ENCODE measurements at regions of chrX and their contacts with region 1.

Region 1: DNA sequence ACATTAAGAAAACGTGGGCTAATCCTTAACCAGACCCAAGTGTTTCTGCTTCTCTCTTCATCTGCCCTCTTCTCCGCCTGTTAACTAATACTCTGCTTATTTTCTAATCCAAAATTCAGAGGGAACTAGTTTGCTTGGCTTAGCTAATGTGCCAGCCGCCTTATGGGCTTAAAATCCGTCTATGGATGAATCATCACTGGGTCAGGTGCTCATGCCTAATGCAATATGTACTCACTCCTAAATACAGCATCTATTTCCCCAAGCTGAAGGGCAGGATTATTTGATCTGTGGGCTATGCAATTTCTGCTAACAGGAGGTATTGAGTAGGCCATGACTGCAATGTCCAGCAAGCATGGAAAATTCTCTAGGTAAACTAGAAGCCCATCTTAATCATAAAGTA is 12.4 kb downstream of the DYNLT3 start:
- DNase-seq: no peak
- ATAC-seq: no peak
- H3K4me3 Mint-ChIP-seq: no peak overlapping the region
- H3K27ac Mint-ChIP-seq: no peak overlapping the region
- H3K4me1 Mint-ChIP-seq: peaks cover 1% of the 10 kb centered on the region
- H3K27me3 Mint-ChIP-seq: no peaks in the 10 kb centered on the region

Region 2: DNA sequence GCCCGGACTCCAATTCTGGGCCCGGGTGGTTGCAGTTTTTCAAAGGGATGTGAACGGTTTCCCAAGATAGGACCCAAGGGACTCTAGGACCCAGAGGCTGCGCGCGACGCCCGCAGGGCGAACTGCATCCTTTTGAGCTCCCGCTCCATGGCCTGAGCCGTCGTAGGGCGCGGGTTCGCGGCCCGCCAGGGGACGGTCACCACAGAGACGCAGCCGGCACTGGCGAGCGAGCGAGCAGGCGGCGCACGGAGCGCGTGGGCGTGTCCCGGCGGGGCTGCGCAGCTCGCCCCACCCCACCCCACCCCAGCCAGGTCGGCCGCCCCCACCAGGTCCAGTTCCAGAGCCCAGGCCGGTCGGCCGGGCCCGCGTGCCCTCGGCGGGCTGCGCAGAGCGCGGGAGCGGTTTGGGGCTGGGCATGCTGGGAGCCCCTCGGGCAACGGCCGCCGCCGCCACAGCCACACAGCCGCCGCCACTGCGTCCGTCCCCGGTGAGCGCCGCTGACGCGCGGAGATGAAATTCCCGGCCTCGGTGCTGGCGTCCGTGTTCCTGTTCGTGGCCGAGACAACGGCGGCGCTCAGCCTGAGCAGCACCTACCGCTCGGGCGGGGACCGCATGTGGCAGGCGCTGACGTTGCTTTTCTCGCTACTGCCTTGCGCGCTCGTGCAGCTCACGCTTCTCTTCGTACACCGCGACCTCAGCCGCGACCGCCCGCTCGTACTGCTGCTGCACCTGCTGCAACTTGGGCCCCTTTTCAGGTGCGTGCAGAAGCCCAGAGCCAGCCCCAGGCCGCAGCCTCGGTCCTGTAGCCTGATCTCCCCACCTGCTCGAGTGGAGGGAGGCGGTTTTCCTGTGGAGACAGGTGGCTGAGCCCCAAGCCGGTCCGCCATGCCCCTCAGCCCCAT is 149.2 kb before region 1 on chrX and contains the start of gene XK:
- CTCF ChIA-PET with region 1: no interaction called
- POLR2A ChIA-PET with region 1: no interaction called
- intact Hi-C with region 1: loop called in 1 of 2 experiments (anchors 10 kb)
- DNase-seq: peak; percentile 69
- ATAC-seq: peak; percentile 79
- H3K4me3 Mint-ChIP-seq: peak within 1 kb of the TSS; percentile 46
- H3K27ac Mint-ChIP-seq: no peak within 1 kb of the TSS
- H3K4me1 Mint-ChIP-seq: no peaks in the 10 kb centered on the region
- H3K27me3 Mint-ChIP-seq: no peaks in the 10 kb centered on the region
- total RNA-seq, gene XK: 0.07 TPM in 1 of 2 experiments, not detected in the other